ENCODE measurements at regions of chr16 and their contacts with region 1.

Region 1: DNA sequence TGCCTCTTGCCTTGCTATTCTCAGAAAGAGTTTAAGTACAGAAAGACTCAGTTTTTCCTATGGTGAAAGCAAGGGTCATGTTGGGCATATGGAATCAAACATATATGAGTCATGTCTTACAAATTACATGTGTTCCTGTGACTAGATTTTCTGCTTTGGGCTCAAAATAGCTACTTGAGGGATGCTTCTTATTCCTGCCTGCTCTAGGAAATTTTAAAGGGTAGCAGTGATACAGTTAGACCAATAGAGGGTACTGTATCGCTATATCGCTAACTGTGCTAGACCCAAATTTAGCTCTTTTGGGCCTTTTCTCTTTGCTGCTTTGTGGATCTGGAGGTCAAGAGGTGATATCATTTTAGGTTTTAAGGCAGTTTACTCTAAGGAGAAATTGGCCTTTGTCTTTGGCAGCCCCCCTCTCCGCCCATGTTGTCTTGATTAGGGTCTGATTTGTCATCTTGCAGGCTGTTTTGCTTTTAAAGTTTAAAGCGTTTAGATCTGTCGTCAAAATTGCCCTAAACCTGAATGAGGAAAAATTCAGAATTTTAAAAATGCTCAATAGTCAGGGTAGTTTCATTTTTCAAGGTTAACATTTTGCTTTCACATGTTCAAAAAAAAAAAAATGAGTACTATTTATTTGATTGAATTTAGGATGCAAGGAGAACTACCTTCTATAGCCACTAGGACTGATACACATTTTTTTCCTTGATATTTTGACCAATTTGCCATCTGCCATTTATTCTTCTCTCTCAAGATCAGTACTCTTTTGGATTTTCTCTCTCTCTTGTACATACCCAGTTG is 8.8 kb downstream of the NFATC3 start:
- DNase-seq: peak in 3 of 14 experiments; percentile 60 to 68 (median 63)
- ATAC-seq: peak; percentile 88
- H3K4me3 ChIP-seq: no peak overlapping the region
- H3K4me3 Mint-ChIP-seq: peak overlapping the region; percentile 58
- H3K27ac ChIP-seq: peak overlapping the region in 1 of 2 donors; percentile 18
- H3K27ac Mint-ChIP-seq: peak overlapping the region; percentile 86
- H3K4me1 ChIP-seq: peaks cover 41% of the 10 kb centered on the region
- H3K4me1 Mint-ChIP-seq: peaks cover 89% of the 10 kb centered on the region
- H3K27me3 ChIP-seq: no peaks in the 10 kb centered on the region
- H3K27me3 Mint-ChIP-seq: no peaks in the 10 kb centered on the region
- CTCF ChIP-seq: peak; percentile 75

Region 2: GRCh38 chr16:68074850-68075555 is 19.0 kb before region 1 on chr16:
- CTCF ChIA-PET with region 1: interaction called, 6 read pairs
- POLR2A ChIA-PET with region 1: interaction called, 12 read pairs
- intact Hi-C with region 1: no loop called
- DNase-seq: peak in 11 of 14 experiments; percentile 24 to 92 (median 48)
- ATAC-seq: peak; percentile 51
- H3K4me3 ChIP-seq: no peak overlapping the region
- H3K4me3 Mint-ChIP-seq: peak overlapping the region; percentile 75
- H3K27ac ChIP-seq: peak overlapping the region in 1 of 2 donors; percentile 14
- H3K27ac Mint-ChIP-seq: peak overlapping the region; percentile 82
- H3K4me1 ChIP-seq: peaks cover 95% of the 10 kb centered on the region
- H3K4me1 Mint-ChIP-seq: peaks cover 87% of the 10 kb centered on the region
- H3K27me3 ChIP-seq: no peaks in the 10 kb centered on the region
- H3K27me3 Mint-ChIP-seq: no peaks in the 10 kb centered on the region
- CTCF ChIP-seq: no peak

Region 3: GRCh38 chr16:68116256-68116867 is 22.3 kb after region 1 on chr16:
- CTCF ChIA-PET with region 1: interaction called, 17 read pairs
- POLR2A ChIA-PET with region 1: no interaction called
- intact Hi-C with region 1: loop called in 1 of 2 experiments (anchors 1 kb)
- DNase-seq: peak in 3 of 14 experiments; percentile 48 to 71 (median 68)
- ATAC-seq: peak; percentile 76
- H3K4me3 ChIP-seq: no peak overlapping the region
- H3K4me3 Mint-ChIP-seq: peak overlapping the region; percentile 65
- H3K27ac ChIP-seq: no peak overlapping the region
- H3K27ac Mint-ChIP-seq: peak overlapping the region; percentile 52
- H3K4me1 ChIP-seq: peaks cover 63% of the 10 kb centered on the region
- H3K4me1 Mint-ChIP-seq: peaks cover 93% of the 10 kb centered on the region
- H3K27me3 ChIP-seq: no peaks in the 10 kb centered on the region
- H3K27me3 Mint-ChIP-seq: no peaks in the 10 kb centered on the region
- CTCF ChIP-seq: peak; percentile 73

Region 4: DNA sequence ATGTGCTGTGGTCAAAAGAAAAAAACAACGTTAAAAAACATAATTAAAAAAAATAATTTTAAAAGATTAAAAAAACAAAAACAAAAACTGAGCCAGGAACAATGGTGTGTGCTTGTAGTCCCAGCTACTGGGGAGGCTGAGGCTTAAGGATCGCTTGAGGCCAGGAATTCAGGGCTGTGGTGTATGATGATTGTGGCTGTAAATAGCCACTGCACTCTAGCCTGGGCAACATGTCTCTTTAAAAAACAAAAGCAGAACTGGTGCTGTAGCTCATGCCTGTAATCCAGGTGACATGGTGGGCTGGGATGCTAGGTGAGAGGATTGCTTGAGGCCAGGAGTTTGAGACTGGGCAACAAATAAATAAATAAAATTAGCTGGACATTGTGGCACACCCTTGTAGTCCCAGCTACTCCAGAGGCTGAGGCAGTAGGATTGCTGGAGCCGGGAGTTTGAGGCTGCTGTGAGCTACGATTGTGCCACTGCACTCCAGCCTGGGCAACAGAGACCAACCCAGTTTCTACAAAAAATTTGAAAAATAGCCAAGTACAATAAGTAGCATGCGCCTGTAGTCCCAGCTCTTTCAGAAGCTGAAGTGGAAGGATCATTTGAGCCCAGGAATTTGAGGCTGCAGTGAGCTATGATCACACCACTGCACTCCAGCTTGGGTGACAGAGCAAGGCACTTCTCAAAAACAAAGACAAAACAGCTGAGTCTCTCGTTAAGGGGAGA is 34.7 kb after region 1 on chr16:
- CTCF ChIA-PET with region 1: interaction called, 11 read pairs
- POLR2A ChIA-PET with region 1: interaction called, 3 read pairs
- intact Hi-C with region 1: loop called (anchors 5 kb)
- DNase-seq: no peak
- ATAC-seq: no peak
- H3K4me3 ChIP-seq: no peak overlapping the region
- H3K4me3 Mint-ChIP-seq: no peak overlapping the region
- H3K27ac ChIP-seq: no peak overlapping the region
- H3K27ac Mint-ChIP-seq: peak overlapping the region; percentile 83
- H3K4me1 ChIP-seq: peaks cover 27% of the 10 kb centered on the region
- H3K4me1 Mint-ChIP-seq: peaks cover 68% of the 10 kb centered on the region
- H3K27me3 ChIP-seq: no peaks in the 10 kb centered on the region
- H3K27me3 Mint-ChIP-seq: no peaks in the 10 kb centered on the region
- CTCF ChIP-seq: no peak

Region 5: DNA sequence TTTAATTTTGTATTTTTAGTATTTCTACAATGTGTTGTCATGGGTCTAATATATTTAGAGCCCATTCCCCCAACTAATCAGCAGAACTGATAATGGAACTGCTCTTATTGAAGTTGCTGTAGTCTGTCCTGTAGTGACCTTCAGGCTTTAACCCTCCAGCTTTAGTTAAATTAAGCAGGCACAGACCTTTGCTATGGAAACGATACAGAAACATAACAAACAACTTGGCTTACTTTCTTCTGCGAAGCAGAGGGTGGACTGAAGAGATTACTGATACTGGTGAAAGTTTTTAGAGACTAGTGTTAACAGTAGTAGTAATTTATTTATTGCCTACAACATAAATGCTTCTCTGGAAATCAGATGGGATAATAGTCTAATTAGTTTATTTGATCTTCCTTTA is 52.6 kb after region 1 on chr16:
- CTCF ChIA-PET with region 1: interaction called, 6 read pairs
- POLR2A ChIA-PET with region 1: no interaction called
- intact Hi-C with region 1: loop called in 1 of 2 experiments (anchors 1 kb)
- DNase-seq: peak in 2 of 14 experiments; percentile 9 to 23
- ATAC-seq: no peak
- H3K4me3 ChIP-seq: no peak overlapping the region
- H3K4me3 Mint-ChIP-seq: no peak overlapping the region
- H3K27ac ChIP-seq: no peak overlapping the region
- H3K27ac Mint-ChIP-seq: peak overlapping the region; percentile 43
- H3K4me1 ChIP-seq: peaks cover 10% of the 10 kb centered on the region
- H3K4me1 Mint-ChIP-seq: peaks cover 59% of the 10 kb centered on the region
- H3K27me3 ChIP-seq: no peaks in the 10 kb centered on the region
- H3K27me3 Mint-ChIP-seq: no peaks in the 10 kb centered on the region
- CTCF ChIP-seq: no peak

Region 6: DNA sequence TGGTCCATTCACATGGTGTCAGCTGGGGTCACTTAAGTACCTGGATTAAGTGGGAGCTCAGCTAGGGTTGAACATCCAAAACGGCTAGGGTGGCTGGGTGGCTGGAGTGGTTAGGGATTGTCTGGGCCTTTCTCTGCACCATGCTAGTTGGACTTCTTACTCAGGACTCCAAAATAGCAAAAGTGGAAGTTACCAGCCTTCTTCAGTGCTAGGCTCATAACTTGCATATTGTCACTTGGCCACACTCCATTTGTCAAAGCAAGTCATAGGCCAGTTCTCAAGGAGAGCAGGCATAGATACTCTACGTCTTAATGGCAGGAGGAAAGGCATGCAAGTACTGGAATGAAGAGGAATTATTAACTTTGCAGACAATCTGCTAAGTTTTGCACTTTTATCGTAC is 72.2 kb after region 1 on chr16:
- CTCF ChIA-PET with region 1: no interaction called
- POLR2A ChIA-PET with region 1: no interaction called
- intact Hi-C with region 1: loop called in 1 of 2 experiments (anchors 5 kb)
- DNase-seq: no peak
- ATAC-seq: no peak
- H3K4me3 ChIP-seq: no peak overlapping the region
- H3K4me3 Mint-ChIP-seq: no peak overlapping the region
- H3K27ac ChIP-seq: no peak overlapping the region
- H3K27ac Mint-ChIP-seq: no peak overlapping the region
- H3K4me1 ChIP-seq: no peaks in the 10 kb centered on the region
- H3K4me1 Mint-ChIP-seq: no peaks in the 10 kb centered on the region
- H3K27me3 ChIP-seq: no peaks in the 10 kb centered on the region
- H3K27me3 Mint-ChIP-seq: no peaks in the 10 kb centered on the region
- CTCF ChIP-seq: no peak

Region 7: GRCh38 chr16:68229431-68230198 is 135.6 kb after region 1 on chr16:
- CTCF ChIA-PET with region 1: interaction called, 20 read pairs
- POLR2A ChIA-PET with region 1: interaction called, 4 read pairs
- intact Hi-C with region 1: loop called (anchors 1 kb)
- DNase-seq: peak in 11 of 14 experiments; percentile 28 to 72 (median 46)
- ATAC-seq: peak; percentile 61
- H3K4me3 ChIP-seq: no peak overlapping the region
- H3K4me3 Mint-ChIP-seq: no peak overlapping the region
- H3K27ac ChIP-seq: no peak overlapping the region
- H3K27ac Mint-ChIP-seq: peak overlapping the region; percentile 67
- H3K4me1 ChIP-seq: peaks cover 23% of the 10 kb centered on the region
- H3K4me1 Mint-ChIP-seq: peaks cover 40% of the 10 kb centered on the region
- H3K27me3 ChIP-seq: no peaks in the 10 kb centered on the region
- H3K27me3 Mint-ChIP-seq: no peaks in the 10 kb centered on the region
- CTCF ChIP-seq: peak; percentile 95

Measured in CD4-positive, alpha-beta T cell (primary cell).